Activated CD8-positive, alpha-beta T cell treated with anti-CD3 and anti-CD28 coated beads for 36 hours (primary cell): ENCODE measurements at regions of chr3 and their contacts with region 1.

Region 1: DNA sequence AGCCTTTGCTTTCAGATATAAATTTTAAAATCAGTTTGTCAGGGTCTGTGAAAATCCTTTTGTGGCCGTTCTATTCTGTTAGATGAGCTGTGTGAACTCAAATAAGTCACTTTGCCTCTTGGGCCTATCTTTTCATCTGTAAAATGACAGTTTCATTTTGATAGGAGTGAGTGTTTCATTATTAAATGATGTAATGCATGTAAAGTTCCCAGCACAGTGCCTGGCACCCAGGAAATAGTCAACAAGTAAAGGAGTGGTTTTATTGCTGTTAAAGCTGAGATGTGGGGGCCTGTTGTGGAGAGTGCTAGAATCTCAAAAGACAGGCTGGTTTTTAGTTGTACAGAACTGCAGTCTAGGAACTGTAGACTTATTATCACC is 394.5 kb upstream of the CFAP20DC start:
- DNase-seq: peak; percentile 59
- ATAC-seq: peak; percentile 81
- H3K4me3 Mint-ChIP-seq: peak overlapping the region; percentile 65
- H3K27ac Mint-ChIP-seq: peak overlapping the region; percentile 96
- H3K4me1 Mint-ChIP-seq: peaks cover 63% of the 10 kb centered on the region
- H3K27me3 Mint-ChIP-seq: no peaks in the 10 kb centered on the region
- CTCF ChIP-seq: no peak

Region 2: DNA sequence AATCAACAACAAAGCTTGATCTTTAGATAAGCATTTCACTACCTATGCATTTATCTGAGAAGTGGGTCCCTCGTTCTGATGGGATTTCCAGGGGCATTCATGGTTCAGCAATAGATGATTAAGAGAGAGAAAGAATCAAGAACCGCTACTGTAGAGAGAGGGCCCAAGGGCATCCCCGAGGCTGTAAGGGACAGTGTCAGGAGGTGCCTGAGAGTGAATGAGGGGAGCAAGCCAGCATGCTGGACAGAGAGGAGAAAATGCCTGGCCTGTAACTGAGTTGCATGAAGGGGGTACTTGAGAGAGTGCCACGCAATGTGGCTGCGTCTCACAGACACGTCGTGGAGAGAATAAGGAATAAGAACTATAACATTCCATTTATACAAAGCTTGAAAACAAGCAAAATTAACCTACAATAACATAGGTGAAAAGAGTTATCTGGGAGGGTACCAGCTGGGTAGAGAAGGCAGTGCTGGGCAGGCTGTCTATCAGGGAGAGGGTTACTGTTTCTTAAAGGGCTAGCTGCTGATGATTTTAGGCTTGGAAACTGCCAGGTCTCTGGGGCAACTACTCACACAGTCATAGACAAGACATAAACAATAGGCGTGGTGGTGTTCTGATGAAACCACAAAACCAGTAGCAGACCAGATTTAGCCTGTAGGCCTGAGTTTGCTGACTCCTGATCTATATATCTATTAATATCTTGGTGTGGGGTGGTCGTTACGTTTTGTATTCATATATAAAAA is 19.8 kb before region 1 on chr3:
- CTCF ChIA-PET with region 1: interaction called, 19 read pairs
- POLR2A ChIA-PET with region 1: interaction called, 27 read pairs
- intact Hi-C with region 1: no loop called
- DNase-seq: peak; percentile 46
- ATAC-seq: peak; percentile 14
- H3K4me3 Mint-ChIP-seq: no peak overlapping the region
- H3K27ac Mint-ChIP-seq: peak overlapping the region; percentile 0
- H3K4me1 Mint-ChIP-seq: peaks cover 63% of the 10 kb centered on the region
- H3K27me3 Mint-ChIP-seq: no peaks in the 10 kb centered on the region
- CTCF ChIP-seq: no peak